GM10248 (cell line): ENCODE measurements at regions of chr2 and their contacts with region 1.

Region 1: GRCh38 chr2:148552675-148553331 is 91.7 kb upstream of the EPC2 start:
- DNase-seq: no peak
- CTCF ChIP-seq: no peak

Region 2: GRCh38 chr2:148530350-148530749 is 22.5 kb before region 1 on chr2:
- CTCF ChIA-PET with region 1: no interaction called
- POLR2A ChIA-PET with region 1: no interaction called
- DNase-seq: no peak
- CTCF ChIP-seq: no peak

Region 3: GRCh38 chr2:148568597-148568996 is 15.8 kb after region 1 on chr2:
- CTCF ChIA-PET with region 1: interaction called, 19 read pairs
- POLR2A ChIA-PET with region 1: no interaction called
- DNase-seq: no peak
- CTCF ChIP-seq: no peak

Region 4: GRCh38 chr2:148614322-148615049 is 61.7 kb after region 1 on chr2:
- CTCF ChIA-PET with region 1: no interaction called
- POLR2A ChIA-PET with region 1: no interaction called
- DNase-seq: peak; percentile 71
- CTCF ChIP-seq: no peak